ENCODE measurements at regions of chr18 and their contacts with region 1.

Region 1: GRCh38 chr18:54261894-54262293 is 7.4 kb upstream of the POLI start:
- DNase-seq: peak; percentile 36
- H3K4me3 ChIP-seq: no peak overlapping the region
- H3K27ac ChIP-seq: peak overlapping the region in 3 of 4 donors; percentile 19 to 34 (median 29)
- H3K4me1 ChIP-seq: no peaks in the 10 kb centered on the region
- H3K27me3 ChIP-seq: no peaks in the 10 kb centered on the region
- CTCF ChIP-seq: no peak
- EP300 ChIP-seq: no peak
- POLR2A ChIP-seq: no peak

Region 2: GRCh38 chr18:54150226-54150625 is 111.7 kb before region 1 on chr18:
- in situ Hi-C with region 1: no loop called
- intact Hi-C with region 1: no loop called
- DNase-seq: no peak
- H3K4me3 ChIP-seq: no peak overlapping the region
- H3K27ac ChIP-seq: no peak overlapping the region
- H3K4me1 ChIP-seq: no peaks in the 10 kb centered on the region
- H3K27me3 ChIP-seq: no peaks in the 10 kb centered on the region
- CTCF ChIP-seq: no peak
- EP300 ChIP-seq: no peak
- POLR2A ChIP-seq: no peak

Region 3: GRCh38 chr18:54224379-54225014 is 37.4 kb before region 1 on chr18 and contains the start of gene MBD2:
- in situ Hi-C with region 1: loop called in 1 of 4 experiments (anchors 5 kb)
- intact Hi-C with region 1: no loop called
- DNase-seq: peak; percentile 96
- H3K4me3 ChIP-seq: peak within 1 kb of the TSS; percentile 53 to 84 (median 80)
- H3K27ac ChIP-seq: peak within 1 kb of the TSS; percentile 85 to 95 (median 92)
- H3K4me1 ChIP-seq: peaks cover 20 to 45% (median 31%) of the 10 kb centered on the region in 4 donors
- H3K27me3 ChIP-seq: no peaks in the 10 kb centered on the region
- CTCF ChIP-seq: peak in 2 of 5 experiments; percentile 12 to 13
- EP300 ChIP-seq: no peak
- POLR2A ChIP-seq: peak; percentile 71
- total RNA-seq, gene MBD2: 26.9 to 62.1 (median 35.9) TPM

Region 4: GRCh38 chr18:54388203-54389142 is 126.6 kb after region 1 on chr18:
- in situ Hi-C with region 1: no loop called
- intact Hi-C with region 1: no loop called
- DNase-seq: peak; percentile 41
- H3K4me3 ChIP-seq: no peak overlapping the region
- H3K27ac ChIP-seq: no peak overlapping the region
- H3K4me1 ChIP-seq: peaks cover 0 to 15% (median 0%) of the 10 kb centered on the region in 4 donors
- H3K27me3 ChIP-seq: no peaks in the 10 kb centered on the region
- CTCF ChIP-seq: no peak
- EP300 ChIP-seq: no peak
- POLR2A ChIP-seq: no peak

Region 5: DNA sequence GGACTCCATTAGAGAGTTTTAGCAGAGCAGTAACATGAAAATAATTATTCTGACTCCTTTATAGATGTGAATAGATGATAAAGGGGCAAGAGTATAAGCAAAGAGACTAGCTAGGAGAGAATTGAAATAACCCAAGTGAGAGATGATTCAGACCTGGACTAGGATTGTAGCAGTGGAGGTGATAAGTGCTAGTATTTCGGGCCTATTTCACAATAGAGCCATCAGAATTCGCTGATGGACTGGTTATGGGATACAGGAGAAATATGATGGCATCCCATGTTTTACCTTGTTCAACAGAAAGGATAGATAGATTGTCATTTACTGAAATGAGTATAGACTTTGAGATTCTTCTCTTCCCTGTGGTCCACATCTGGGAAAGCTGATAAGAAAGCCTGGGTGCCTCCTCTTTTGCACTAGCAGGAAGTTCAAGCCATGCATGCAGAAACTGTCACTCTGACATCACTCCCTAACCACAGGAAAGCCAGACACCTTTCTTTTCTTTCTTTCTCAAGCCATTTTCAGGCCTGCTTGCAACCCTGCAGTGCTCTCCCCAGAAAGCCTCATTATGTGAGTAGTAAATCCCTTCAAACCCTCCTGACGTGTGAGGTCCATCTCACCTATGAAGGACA is 354.4 kb after region 1 on chr18:
- in situ Hi-C with region 1: no loop called
- intact Hi-C with region 1: no loop called
- DNase-seq: no peak
- H3K4me3 ChIP-seq: no peak overlapping the region
- H3K27ac ChIP-seq: no peak overlapping the region
- H3K4me1 ChIP-seq: peaks cover 3 to 8% (median 4%) of the 10 kb centered on the region in 4 donors
- H3K27me3 ChIP-seq: no peaks in the 10 kb centered on the region
- CTCF ChIP-seq: no peak
- EP300 ChIP-seq: no peak
- POLR2A ChIP-seq: no peak

Region 6: DNA sequence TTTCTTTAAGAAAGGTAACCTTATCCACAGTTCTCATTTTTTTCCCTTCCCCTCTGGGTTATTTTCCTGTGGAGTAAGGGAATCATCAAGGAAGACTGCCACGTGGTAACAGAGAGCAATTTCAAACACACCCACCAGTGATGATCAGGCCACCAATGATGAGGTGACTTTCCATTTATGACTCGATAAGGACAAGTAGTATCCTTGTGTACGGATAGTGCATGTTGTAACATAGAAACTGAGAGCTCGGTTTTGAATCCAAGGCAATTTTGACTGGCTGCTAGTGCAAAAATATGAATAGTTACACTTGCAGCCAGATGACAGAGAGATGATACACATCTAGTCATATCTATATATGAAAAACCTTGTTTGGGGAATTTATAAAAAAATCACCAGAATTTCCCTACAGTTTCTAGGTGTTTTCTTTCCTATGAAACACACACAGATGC is 1469.7 kb after region 1 on chr18:
- in situ Hi-C with region 1: no loop called
- intact Hi-C with region 1: no loop called
- DNase-seq: no peak
- H3K4me3 ChIP-seq: no peak overlapping the region
- H3K27ac ChIP-seq: no peak overlapping the region
- H3K4me1 ChIP-seq: no peaks in the 10 kb centered on the region
- H3K27me3 ChIP-seq: no peaks in the 10 kb centered on the region
- CTCF ChIP-seq: no peak
- EP300 ChIP-seq: no peak
- POLR2A ChIP-seq: no peak